ENCODE measurements at regions of chr15 and their contacts with region 1.

Region 1: DNA sequence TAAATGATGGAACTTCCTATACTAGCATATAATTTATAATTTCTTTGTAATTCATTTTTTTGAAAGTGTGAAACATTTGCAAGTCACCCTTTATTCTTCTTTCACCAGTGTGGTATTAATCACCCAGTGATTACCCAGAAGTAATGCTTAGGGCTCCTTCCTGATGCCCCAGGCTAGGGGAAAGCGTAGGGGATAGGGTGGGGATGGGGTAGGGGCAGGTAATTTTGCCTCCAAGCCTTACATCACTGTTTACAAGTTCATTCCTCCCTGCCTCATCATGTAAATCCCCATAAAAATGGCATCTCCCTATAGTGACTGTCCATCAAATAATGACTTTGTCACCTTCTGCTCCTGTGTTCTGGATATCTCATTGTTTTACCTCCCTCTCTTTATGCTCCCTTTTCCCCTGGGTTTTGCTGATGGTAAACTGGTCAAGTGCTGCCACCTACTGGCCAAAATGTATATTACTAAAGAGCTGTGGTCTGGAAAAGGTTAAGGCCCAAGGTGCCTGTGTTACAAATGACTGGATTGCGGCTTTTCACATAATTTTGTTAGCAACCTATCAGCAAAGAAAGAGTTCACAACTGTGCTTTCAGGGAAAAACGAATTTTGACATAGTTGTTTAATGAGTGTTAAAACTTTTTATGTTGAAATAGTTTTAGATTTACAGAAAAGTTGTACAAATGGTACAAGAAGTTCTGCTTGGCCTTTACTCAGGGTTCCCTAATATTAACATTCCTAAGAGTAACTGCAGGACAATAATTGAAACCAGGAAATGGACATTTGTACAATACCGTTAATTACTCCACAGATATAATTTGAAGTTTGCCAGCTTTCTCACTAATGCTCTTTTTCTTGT is 54.7 kb downstream of the ONECUT1 start:
- DNase-seq: peak; percentile 64
- ATAC-seq: peak; percentile 89
- H3K4me3 Mint-ChIP-seq: no peak overlapping the region
- H3K27ac Mint-ChIP-seq: no peak overlapping the region
- H3K4me1 Mint-ChIP-seq: peaks cover 29% of the 10 kb centered on the region
- H3K27me3 Mint-ChIP-seq: peaks cover 10% of the 10 kb centered on the region
- CTCF ChIP-seq: peak; percentile 81

Region 2: DNA sequence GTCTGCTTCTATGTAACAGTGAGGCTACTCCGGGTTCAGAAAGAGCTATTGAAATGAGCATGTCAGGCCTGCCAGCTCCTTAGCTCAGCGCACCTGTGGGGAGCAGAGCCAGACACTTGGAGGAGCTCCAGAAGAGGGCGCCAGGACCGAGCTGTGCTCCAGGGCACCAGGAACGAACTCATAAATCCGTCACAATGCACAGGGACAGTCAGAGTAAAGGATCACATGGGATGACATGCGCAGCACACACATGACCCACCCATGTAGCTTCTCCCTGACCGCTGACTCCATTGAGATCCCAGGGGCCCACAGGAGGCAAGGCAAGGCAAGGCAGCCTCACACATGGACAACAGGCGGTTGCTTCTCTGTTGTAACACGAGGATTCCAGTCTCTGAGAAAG is 518.3 kb before region 1 on chr15:
- CTCF ChIA-PET with region 1: interaction called, 15 read pairs
- POLR2A ChIA-PET with region 1: no interaction called
- DNase-seq: peak; percentile 68
- ATAC-seq: peak; percentile 98
- H3K4me3 Mint-ChIP-seq: no peak overlapping the region
- H3K27ac Mint-ChIP-seq: no peak overlapping the region
- H3K4me1 Mint-ChIP-seq: no peaks in the 10 kb centered on the region
- H3K27me3 Mint-ChIP-seq: no peaks in the 10 kb centered on the region
- CTCF ChIP-seq: no peak; the same call in 1 of the 2 replicates

Region 3: GRCh38 chr15:52256366-52256765 is 479.1 kb before region 1 on chr15:
- CTCF ChIA-PET with region 1: interaction called, 25 read pairs
- POLR2A ChIA-PET with region 1: interaction called, 5 read pairs
- DNase-seq: peak; percentile 72
- ATAC-seq: no peak
- H3K4me3 Mint-ChIP-seq: no peak overlapping the region
- H3K27ac Mint-ChIP-seq: no peak overlapping the region
- H3K4me1 Mint-ChIP-seq: peaks cover 32% of the 10 kb centered on the region
- H3K27me3 Mint-ChIP-seq: no peaks in the 10 kb centered on the region
- CTCF ChIP-seq: peak; percentile 78

Region 4: GRCh38 chr15:52261498-52262242 is 473.8 kb before region 1 on chr15:
- CTCF ChIA-PET with region 1: interaction called, 25 read pairs
- POLR2A ChIA-PET with region 1: interaction called, 5 read pairs
- DNase-seq: peak; percentile 78
- ATAC-seq: peak; percentile 96
- H3K4me3 Mint-ChIP-seq: peak overlapping the region; percentile 30
- H3K27ac Mint-ChIP-seq: peak overlapping the region; percentile 94
- H3K4me1 Mint-ChIP-seq: peaks cover 55% of the 10 kb centered on the region
- H3K27me3 Mint-ChIP-seq: no peaks in the 10 kb centered on the region
- CTCF ChIP-seq: no peak

Measured in WTC11 (cell line).